Left colon (tissue), 2 donors: ENCODE measurements at regions of chr2 and their contacts with region 1.

Region 1: DNA sequence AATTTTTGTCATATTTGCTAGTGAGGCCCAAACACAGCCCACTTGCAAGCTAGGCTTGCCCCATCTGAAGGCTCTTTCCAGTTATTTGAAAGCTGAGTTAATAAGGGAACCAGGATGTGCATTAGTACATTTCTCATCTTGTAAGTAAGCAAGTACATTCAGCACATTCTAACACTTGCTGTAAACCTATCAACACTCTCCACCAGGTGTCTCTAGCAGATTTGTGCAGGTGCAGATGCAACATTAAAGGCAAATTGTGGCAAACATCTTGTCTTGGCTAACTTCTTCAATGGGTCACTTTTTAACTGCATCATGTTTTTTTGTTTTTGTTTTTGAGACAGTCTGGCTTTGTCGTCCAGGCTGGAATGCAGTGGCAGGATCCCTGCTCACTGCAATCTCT is 25.3 kb upstream of the MFSD6 start:
- DNase-seq: no peak
- ATAC-seq: peak; percentile 95

Region 2: GRCh38 chr2:190507135-190507534 is 124.3 kb after region 1 on chr2:
- intact Hi-C with region 1: loop called in 1 of 2 experiments (anchors 10 kb)
- DNase-seq: peak; percentile 59 to 67
- ATAC-seq: peak; percentile 38